GM10248 (cell line): ENCODE measurements at regions of chr11 and their contacts with region 1.

Region 1: GRCh38 chr11:108237058-108237481 is 14.2 kb downstream of the ATM start:
- DNase-seq: no peak
- CTCF ChIP-seq: no peak

Region 2: DNA sequence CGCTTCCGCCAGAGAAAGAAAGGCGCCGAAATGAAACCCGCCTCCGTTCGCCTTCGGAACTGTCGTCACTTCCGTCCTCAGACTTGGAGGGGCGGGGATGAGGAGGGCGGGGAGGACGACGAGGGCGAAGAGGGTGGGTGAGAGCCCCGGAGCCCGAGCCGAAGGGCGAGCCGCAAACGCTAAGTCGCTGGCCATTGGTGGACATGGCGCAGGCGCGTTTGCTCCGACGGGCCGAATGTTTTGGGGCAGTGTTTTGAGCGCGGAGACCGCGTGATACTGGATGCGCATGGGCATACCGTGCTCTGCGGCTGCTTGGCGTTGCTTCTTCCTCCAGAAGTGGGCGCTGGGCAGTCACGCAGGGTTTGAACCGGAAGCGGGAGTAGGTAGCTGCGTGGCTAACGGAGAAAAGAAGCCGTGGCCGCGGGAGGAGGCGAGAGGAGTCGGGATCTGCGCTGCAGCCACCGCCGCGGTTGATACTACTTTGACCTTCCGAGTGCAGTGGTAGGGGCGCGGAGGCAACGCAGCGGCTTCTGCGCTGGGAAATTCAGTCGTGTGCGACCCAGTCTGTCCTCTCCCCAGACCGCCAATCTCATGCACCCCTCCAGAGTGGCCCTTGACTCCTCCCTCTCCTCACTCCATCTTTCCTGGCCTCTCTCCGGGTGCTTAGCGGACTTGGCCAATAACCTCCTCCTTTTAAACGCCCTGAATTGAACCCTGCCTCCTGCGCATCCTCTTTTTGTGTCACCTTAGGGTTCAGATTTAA is 14.2 kb before region 1 on chr11 and contains the start of gene ATM:
- CTCF ChIA-PET with region 1: interaction called, 12 read pairs
- POLR2A ChIA-PET with region 1: interaction called, 5 read pairs
- DNase-seq: peak; percentile 93
- CTCF ChIP-seq: peak; percentile 94

Region 3: DNA sequence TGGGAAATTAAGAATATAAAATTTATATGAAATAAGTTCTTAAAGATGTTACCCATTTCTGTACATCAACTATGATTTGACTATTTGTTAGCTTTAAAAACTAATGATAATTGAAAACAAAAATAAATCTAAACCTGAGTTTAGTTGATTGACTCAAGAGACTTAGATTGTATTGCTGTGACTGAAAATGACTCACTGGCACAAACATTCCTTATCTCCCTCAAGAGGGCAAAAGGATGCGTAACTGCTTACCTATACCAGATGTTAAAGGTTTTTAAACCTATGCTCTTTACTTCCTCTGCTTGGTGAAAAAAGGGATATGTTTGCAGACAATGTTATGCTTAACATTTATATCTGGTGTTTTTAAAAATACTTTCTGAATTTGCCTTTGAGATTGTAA is 16.1 kb after region 1 on chr11:
- CTCF ChIA-PET with region 1: interaction called, 15 read pairs
- POLR2A ChIA-PET with region 1: interaction called, 4 read pairs
- DNase-seq: no peak
- CTCF ChIP-seq: no peak